ENCODE measurements at regions of chr9 and their contacts with region 1.

Region 1: GRCh38 chr9:20582150-20582549 is 40.1 kb downstream of the MLLT3 start:
- DNase-seq: no peak
- H3K4me3 Mint-ChIP-seq: no peak overlapping the region
- H3K27ac Mint-ChIP-seq: no peak overlapping the region
- H3K4me1 Mint-ChIP-seq: peaks cover 64% of the 10 kb centered on the region
- H3K27me3 Mint-ChIP-seq: no peaks in the 10 kb centered on the region

Region 2: GRCh38 chr9:20640331-20641187 is 58.4 kb after region 1 on chr9:
- CTCF ChIA-PET with region 1: no interaction called
- POLR2A ChIA-PET with region 1: no interaction called
- intact Hi-C with region 1: loop called (anchors 10 kb)
- DNase-seq: peak; percentile 81
- H3K4me3 Mint-ChIP-seq: peak overlapping the region; percentile 18
- H3K27ac Mint-ChIP-seq: peak overlapping the region; percentile 49
- H3K4me1 Mint-ChIP-seq: peaks cover 10% of the 10 kb centered on the region
- H3K27me3 Mint-ChIP-seq: peaks cover 3% of the 10 kb centered on the region